Thyroid gland (tissue), 4 donors: ENCODE measurements at regions of chr6 and their contacts with region 1.

Region 1: DNA sequence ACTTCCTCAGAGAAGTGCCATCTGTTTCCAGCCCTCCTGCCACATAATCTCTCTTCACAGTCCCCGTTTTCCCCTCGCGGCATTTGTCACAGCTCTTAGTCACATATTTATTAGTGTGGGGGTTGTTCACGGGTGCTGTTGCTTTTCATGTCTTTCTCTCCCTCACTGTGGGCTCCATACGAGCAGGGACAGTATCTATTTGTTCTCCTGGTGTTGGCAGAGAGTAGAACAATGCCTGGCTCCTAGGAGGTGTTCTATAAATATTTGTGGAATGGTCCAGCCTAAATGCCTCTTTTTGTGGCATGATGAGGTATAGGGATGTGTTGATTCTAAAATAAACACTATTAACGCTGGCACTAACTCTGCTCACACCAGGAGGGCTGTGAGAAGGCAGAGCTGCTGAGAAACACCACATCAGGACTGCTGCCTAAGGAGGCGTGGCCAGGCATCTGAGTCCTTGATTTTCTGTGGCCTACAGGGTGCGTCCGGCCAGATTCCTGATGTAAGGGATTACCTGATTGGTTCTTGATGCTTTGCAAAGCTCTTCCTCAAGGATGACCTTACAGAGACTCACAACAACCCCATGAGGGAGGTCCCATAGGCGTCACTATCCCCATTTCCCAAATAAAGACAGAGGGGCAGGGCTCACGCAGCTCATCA is 219.8 kb upstream of the ARID1B start:
- DNase-seq: peak in 1 of 2 donors; percentile 8
- H3K4me3 ChIP-seq: no peak overlapping the region
- H3K27ac ChIP-seq: no peak overlapping the region
- H3K4me1 ChIP-seq: no peaks in the 10 kb centered on the region
- H3K27me3 ChIP-seq: no peaks in the 10 kb centered on the region
- CTCF ChIP-seq: no peak
- POLR2A ChIP-seq: no peak

Region 2: GRCh38 chr6:156068881-156069280 is 488.5 kb before region 1 on chr6:
- intact Hi-C with region 1: no loop called
- DNase-seq: no peak
- H3K4me3 ChIP-seq: no peak overlapping the region
- H3K27ac ChIP-seq: no peak overlapping the region
- H3K4me1 ChIP-seq: no peaks in the 10 kb centered on the region
- H3K27me3 ChIP-seq: no peaks in the 10 kb centered on the region
- CTCF ChIP-seq: no peak
- POLR2A ChIP-seq: no peak

Region 3: GRCh38 chr6:156146891-156147290 is 410.5 kb before region 1 on chr6:
- intact Hi-C with region 1: no loop called
- DNase-seq: no peak
- H3K4me3 ChIP-seq: no peak overlapping the region
- H3K27ac ChIP-seq: no peak overlapping the region
- H3K4me1 ChIP-seq: no peaks in the 10 kb centered on the region
- H3K27me3 ChIP-seq: no peaks in the 10 kb centered on the region
- CTCF ChIP-seq: no peak
- POLR2A ChIP-seq: no peak

Region 4: GRCh38 chr6:156497618-156498017 is 59.8 kb before region 1 on chr6:
- intact Hi-C with region 1: no loop called
- DNase-seq: no peak
- H3K4me3 ChIP-seq: no peak overlapping the region
- H3K27ac ChIP-seq: no peak overlapping the region
- H3K4me1 ChIP-seq: no peaks in the 10 kb centered on the region
- H3K27me3 ChIP-seq: no peaks in the 10 kb centered on the region
- CTCF ChIP-seq: no peak
- POLR2A ChIP-seq: no peak

Region 5: GRCh38 chr6:156756630-156757610 is 199.5 kb after region 1 on chr6:
- intact Hi-C with region 1: loop called (anchors 5 kb)
- DNase-seq: no peak
- H3K4me3 ChIP-seq: no peak overlapping the region
- H3K27ac ChIP-seq: no peak overlapping the region
- H3K4me1 ChIP-seq: peaks cover 0 to 11% of the 10 kb centered on the region in 2 donors
- H3K27me3 ChIP-seq: no peaks in the 10 kb centered on the region
- CTCF ChIP-seq: no peak
- POLR2A ChIP-seq: no peak